CD8-positive, alpha-beta memory T cell (primary cell): ENCODE measurements at regions of chr19 and their contacts with region 1.

Region 1: GRCh38 chr19:14419106-14419813 is at the start of gene DDX39A:
- DNase-seq: peak; percentile 95 to 99 (median 97)
- H3K4me3 ChIP-seq: peak within 1 kb of the TSS; percentile 72
- H3K4me3 Mint-ChIP-seq: peak within 1 kb of the TSS; percentile 86 to 97 (median 93)
- H3K27ac ChIP-seq: peak within 1 kb of the TSS; percentile 94
- H3K27ac Mint-ChIP-seq: peak within 1 kb of the TSS; percentile 91 to 98 (median 98)
- H3K4me1 ChIP-seq: peaks cover 39% of the 10 kb centered on the region
- H3K4me1 Mint-ChIP-seq: peaks cover 34 to 49% (median 47%) of the 10 kb centered on the region in 3 donors
- H3K27me3 ChIP-seq: no peaks in the 10 kb centered on the region
- H3K27me3 Mint-ChIP-seq: peaks cover 0 to 9% of the 10 kb centered on the region in 2 donors
- total RNA-seq, gene DDX39A: 298 to 302 TPM

Region 2: GRCh38 chr19:14432791-14433553 is 13.7 kb after region 1 on chr19 and contains the start of gene PKN1:
- CTCF ChIA-PET with region 1: interaction called, 14 read pairs
- POLR2A ChIA-PET with region 1: interaction called, 11 read pairs
- DNase-seq: peak in 4 of 5 donors; percentile 32 to 71 (median 52)
- H3K4me3 ChIP-seq: peak within 1 kb of the TSS; percentile 59
- H3K4me3 Mint-ChIP-seq: peak within 1 kb of the TSS; percentile 82 to 95 (median 87)
- H3K27ac ChIP-seq: peak within 1 kb of the TSS; percentile 74
- H3K27ac Mint-ChIP-seq: peak within 1 kb of the TSS; percentile 84 to 97 (median 92)
- H3K4me1 ChIP-seq: peaks cover 35% of the 10 kb centered on the region
- H3K4me1 Mint-ChIP-seq: peaks cover 29 to 47% (median 41%) of the 10 kb centered on the region in 3 donors
- H3K27me3 ChIP-seq: no peaks in the 10 kb centered on the region
- H3K27me3 Mint-ChIP-seq: peaks cover 0 to 1% of the 10 kb centered on the region in 2 donors
- total RNA-seq, gene PKN1: 177 to 205 TPM

Region 3: GRCh38 chr19:14512411-14512961 is 93.2 kb after region 1 on chr19:
- CTCF ChIA-PET with region 1: no interaction called
- POLR2A ChIA-PET with region 1: interaction called, 11 read pairs
- DNase-seq: peak in 1 of 5 donors; percentile 11
- H3K4me3 ChIP-seq: no peak overlapping the region
- H3K4me3 Mint-ChIP-seq: peak overlapping the region in 2 of 7 donors; percentile 25 to 40
- H3K27ac ChIP-seq: no peak overlapping the region
- H3K27ac Mint-ChIP-seq: peak overlapping the region in 2 of 8 donors; percentile 50 to 97
- H3K4me1 ChIP-seq: peaks cover 57% of the 10 kb centered on the region
- H3K4me1 Mint-ChIP-seq: peaks cover 46 to 56% (median 47%) of the 10 kb centered on the region in 3 donors
- H3K27me3 ChIP-seq: no peaks in the 10 kb centered on the region
- H3K27me3 Mint-ChIP-seq: peaks cover 0 to 11% of the 10 kb centered on the region in 2 donors